Vagina (tissue), 2 donors: ENCODE measurements at regions of chr2 and their contacts with region 1.

Region 1: GRCh38 chr2:16756831-16757644 is 91.4 kb upstream of the CYRIA start:
- DNase-seq: no peak
- H3K4me3 ChIP-seq: peak overlapping the region in 1 of 2 donors; percentile 7
- H3K27ac ChIP-seq: peak overlapping the region; percentile 66
- H3K4me1 ChIP-seq: no peaks in the 10 kb centered on the region
- H3K27me3 ChIP-seq: no peaks in the 10 kb centered on the region
- CTCF ChIP-seq: peak; percentile 87 to 94 (median 94)
- POLR2A ChIP-seq: no peak

Region 2: GRCh38 chr2:16617282-16618261 is 139.5 kb before region 1 on chr2:
- intact Hi-C with region 1: loop called (anchors 5 kb)
- DNase-seq: no peak
- H3K4me3 ChIP-seq: no peak overlapping the region
- H3K27ac ChIP-seq: no peak overlapping the region
- H3K4me1 ChIP-seq: peaks cover 45% of the 10 kb centered on the region
- H3K27me3 ChIP-seq: no peaks in the 10 kb centered on the region
- CTCF ChIP-seq: peak in 1 of 3 experiments; percentile 36
- POLR2A ChIP-seq: no peak

Region 3: DNA sequence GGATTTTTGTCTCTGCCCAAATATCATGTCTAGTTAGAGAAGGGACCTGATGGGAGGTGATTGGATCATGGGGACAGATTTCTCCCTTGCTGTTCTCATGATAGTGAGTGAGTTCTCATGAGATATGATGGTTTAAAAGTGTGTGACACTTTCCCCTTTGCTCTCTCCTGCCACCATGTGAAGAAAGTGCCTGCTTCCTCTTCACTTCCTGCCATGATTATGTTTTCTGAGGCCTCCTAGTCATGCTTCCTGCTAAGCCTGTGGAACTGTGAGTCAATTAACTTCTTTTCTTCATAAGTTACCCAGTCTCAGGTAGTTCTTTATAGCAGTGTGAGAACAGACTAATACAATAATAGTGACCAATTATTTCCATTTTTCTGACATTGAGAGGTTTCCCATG is 75.9 kb after region 1 on chr2:
- intact Hi-C with region 1: no loop called
- DNase-seq: no peak
- H3K4me3 ChIP-seq: no peak overlapping the region
- H3K27ac ChIP-seq: no peak overlapping the region
- H3K4me1 ChIP-seq: no peaks in the 10 kb centered on the region
- H3K27me3 ChIP-seq: no peaks in the 10 kb centered on the region
- CTCF ChIP-seq: no peak
- POLR2A ChIP-seq: no peak

Region 4: GRCh38 chr2:16851126-16851525 is 94.1 kb after region 1 on chr2:
- intact Hi-C with region 1: no loop called
- DNase-seq: no peak
- H3K4me3 ChIP-seq: no peak overlapping the region
- H3K27ac ChIP-seq: no peak overlapping the region
- H3K4me1 ChIP-seq: no peaks in the 10 kb centered on the region
- H3K27me3 ChIP-seq: no peaks in the 10 kb centered on the region
- CTCF ChIP-seq: no peak
- POLR2A ChIP-seq: no peak